ENCODE measurements at regions of chr2 and their contacts with region 1.

Region 1: GRCh38 chr2:162333968-162334367 is 10.0 kb upstream of the GCA start:
- DNase-seq: no peak
- ATAC-seq: peak; percentile 68
- H3K4me3 ChIP-seq: no peak overlapping the region
- H3K4me3 Mint-ChIP-seq: no peak overlapping the region
- H3K27ac ChIP-seq: no peak overlapping the region
- H3K27ac Mint-ChIP-seq: no peak overlapping the region
- H3K4me1 ChIP-seq: no peaks in the 10 kb centered on the region
- H3K4me1 Mint-ChIP-seq: peaks cover 0 to 3% (median 0%) of the 10 kb centered on the region in 7 donors
- H3K27me3 ChIP-seq: no peaks in the 10 kb centered on the region
- H3K27me3 Mint-ChIP-seq: no peaks in the 10 kb centered on the region

Region 2: DNA sequence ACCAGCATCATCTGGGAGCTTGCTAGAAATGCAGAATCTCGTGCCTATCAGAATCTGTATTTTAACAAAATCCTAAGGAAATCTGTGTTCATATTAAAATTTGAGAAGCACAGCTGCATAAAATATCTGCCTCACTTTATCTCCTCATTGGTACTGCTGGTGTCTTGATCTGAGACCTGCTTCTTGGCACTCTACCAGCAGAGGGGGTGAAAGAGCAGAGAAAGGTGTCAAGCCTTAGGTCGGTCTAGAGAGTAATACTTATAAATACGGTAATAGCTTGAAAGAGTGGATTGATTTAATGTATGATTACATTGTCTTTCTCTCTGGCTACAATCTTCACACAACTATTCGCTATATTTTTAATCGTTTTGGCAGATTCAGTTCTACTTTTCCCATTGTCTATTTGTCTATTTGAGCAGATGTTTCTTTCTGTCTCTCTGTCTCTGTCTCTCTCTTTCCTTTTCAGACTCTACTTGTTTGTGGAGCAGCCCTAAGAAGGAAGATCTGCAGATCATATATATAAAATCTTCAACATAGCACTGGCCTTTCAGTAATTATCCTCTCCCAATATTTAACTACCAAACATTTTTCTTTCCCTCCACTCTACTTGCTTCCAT is 180.3 kb before region 1 on chr2:
- CTCF ChIA-PET with region 1: no interaction called
- POLR2A ChIA-PET with region 1: no interaction called
- intact Hi-C with region 1: loop called in 1 of 2 experiments (anchors 1 kb)
- DNase-seq: peak in 8 of 9 donors; percentile 11 to 57 (median 46)
- ATAC-seq: peak; percentile 90
- H3K4me3 ChIP-seq: no peak overlapping the region
- H3K4me3 Mint-ChIP-seq: peak overlapping the region in 8 of 10 donors; percentile 3 to 71 (median 41)
- H3K27ac ChIP-seq: no peak overlapping the region
- H3K27ac Mint-ChIP-seq: no peak overlapping the region
- H3K4me1 ChIP-seq: no peaks in the 10 kb centered on the region
- H3K4me1 Mint-ChIP-seq: peaks cover 0 to 7% (median 5%) of the 10 kb centered on the region in 7 donors
- H3K27me3 ChIP-seq: no peaks in the 10 kb centered on the region
- H3K27me3 Mint-ChIP-seq: peaks cover 24 to 60% (median 42%) of the 10 kb centered on the region in 5 donors

Region 3: DNA sequence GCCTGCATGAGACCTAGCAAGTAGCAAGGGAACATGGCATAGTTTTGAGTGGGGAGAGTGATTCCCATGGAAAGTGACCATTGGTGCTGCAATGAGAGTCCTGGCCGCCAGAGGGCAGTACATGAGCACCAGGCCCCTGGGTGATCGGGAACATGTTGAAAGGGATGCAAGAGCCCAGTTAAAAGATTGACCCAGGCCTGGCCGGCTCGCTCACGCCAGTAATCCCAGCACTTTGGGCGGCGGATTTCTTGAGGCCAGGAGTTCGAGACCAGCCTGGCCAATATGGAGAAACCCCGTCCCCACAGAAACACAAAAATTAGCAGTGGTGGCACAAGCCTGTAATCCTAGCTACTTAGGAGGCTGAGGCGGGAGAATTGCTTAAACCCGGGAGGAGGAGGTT is 112.9 kb before region 1 on chr2:
- CTCF ChIA-PET with region 1: interaction called, 7 read pairs
- POLR2A ChIA-PET with region 1: no interaction called
- intact Hi-C with region 1: loop called (anchors 1 kb)
- DNase-seq: peak in 8 of 9 donors; percentile 5 to 62 (median 28)
- ATAC-seq: peak; percentile 83
- H3K4me3 ChIP-seq: no peak overlapping the region
- H3K4me3 Mint-ChIP-seq: no peak overlapping the region
- H3K27ac ChIP-seq: no peak overlapping the region
- H3K27ac Mint-ChIP-seq: no peak overlapping the region
- H3K4me1 ChIP-seq: no peaks in the 10 kb centered on the region
- H3K4me1 Mint-ChIP-seq: peaks cover 0 to 5% (median 0%) of the 10 kb centered on the region in 7 donors
- H3K27me3 ChIP-seq: no peaks in the 10 kb centered on the region
- H3K27me3 Mint-ChIP-seq: peaks cover 32 to 48% (median 39%) of the 10 kb centered on the region in 5 donors

Region 4: DNA sequence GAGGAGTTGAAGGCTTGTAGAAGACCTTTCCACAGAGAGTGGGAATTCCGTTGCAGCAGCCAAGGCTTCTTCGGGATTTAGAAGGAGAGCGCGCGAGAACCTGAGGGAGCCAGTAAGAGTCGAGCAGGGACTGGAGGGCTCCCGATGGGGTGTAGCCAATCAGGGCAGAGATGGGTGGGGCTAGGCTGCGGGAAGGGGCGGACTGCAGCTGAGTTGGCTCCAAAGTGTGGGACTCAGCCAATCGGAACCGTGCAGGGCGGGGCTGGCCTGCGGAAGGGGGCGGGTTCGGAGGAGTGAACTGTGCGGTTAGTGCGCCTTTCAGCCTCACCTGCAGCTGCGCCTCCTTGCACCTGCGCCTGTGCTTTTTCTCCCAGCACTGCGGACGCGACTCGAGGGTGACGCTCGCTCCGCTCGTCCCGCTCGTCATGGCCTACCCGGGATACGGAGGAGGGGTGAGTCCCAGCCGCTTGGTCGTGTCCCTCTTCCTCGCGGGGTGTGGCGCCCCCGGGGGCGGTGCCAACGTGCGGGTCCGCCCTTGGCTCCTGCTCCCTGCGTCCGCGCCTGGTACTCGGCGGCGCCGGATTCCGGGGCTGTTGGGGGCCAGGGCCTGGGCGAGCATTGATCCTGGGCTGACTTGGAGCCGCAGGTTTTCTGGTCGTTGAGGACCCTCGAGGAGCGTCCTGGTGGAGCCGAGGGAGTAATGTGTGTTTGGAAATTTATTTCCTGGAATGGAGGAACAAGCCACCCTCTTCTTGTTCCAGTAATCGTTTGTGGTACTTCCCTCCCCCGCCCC is 10.1 kb after region 1 on chr2 and contains the start of gene GCA:
- CTCF ChIA-PET with region 1: interaction called, 3 read pairs
- POLR2A ChIA-PET with region 1: no interaction called
- intact Hi-C with region 1: loop called (anchors 1 kb)
- DNase-seq: peak; percentile 96 to 99 (median 98)
- ATAC-seq: peak; percentile 99
- H3K4me3 ChIP-seq: peak within 1 kb of the TSS; percentile 87
- H3K4me3 Mint-ChIP-seq: peak within 1 kb of the TSS; percentile 78 to 96 (median 91)
- H3K27ac ChIP-seq: peak within 1 kb of the TSS; percentile 53
- H3K27ac Mint-ChIP-seq: peak within 1 kb of the TSS; percentile 70 to 92 (median 81)
- H3K4me1 ChIP-seq: peaks cover 4 to 5% of the 10 kb centered on the region in 2 donors
- H3K4me1 Mint-ChIP-seq: peaks cover 0 to 21% (median 19%) of the 10 kb centered on the region in 7 donors
- H3K27me3 ChIP-seq: no peaks in the 10 kb centered on the region
- H3K27me3 Mint-ChIP-seq: peaks cover 0 to 9% (median 0%) of the 10 kb centered on the region in 5 donors
- total RNA-seq, gene GCA: 10.9 to 56.3 (median 13.4) TPM

Measured in naive thymus-derived CD4-positive, alpha-beta T cell (primary cell).